ENCODE measurements at regions of chr3 and their contacts with region 1.

Region 1: GRCh38 chr3:151918253-151919029 is 45.0 kb downstream of the SUCNR1 start:
- DNase-seq: no peak
- ATAC-seq: peak; percentile 55

Region 2: GRCh38 chr3:151439652-151440129 is 478.8 kb before region 1 on chr3:
- intact Hi-C with region 1: loop called (anchors 10 kb)
- DNase-seq: no peak
- ATAC-seq: peak; percentile 84

Region 3: DNA sequence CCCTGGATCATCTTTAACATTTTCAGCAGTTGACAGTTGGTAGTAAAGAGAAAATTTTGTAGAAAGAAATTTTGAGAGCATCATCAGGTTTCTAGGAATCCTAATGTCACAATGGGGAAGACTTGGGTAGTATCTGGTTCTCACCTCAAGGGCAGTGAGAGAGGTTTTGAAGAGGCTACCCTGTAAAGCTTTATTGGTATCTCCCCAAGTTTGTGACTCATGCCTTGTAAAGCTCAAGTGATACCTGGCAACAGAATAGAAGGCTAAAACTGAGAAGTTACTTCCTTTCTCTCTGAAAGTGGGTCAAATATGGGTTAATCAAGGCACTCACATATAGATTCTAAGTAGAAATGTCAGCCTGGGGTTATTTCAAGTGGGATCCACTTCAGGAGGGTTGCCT is 151.4 kb after region 1 on chr3:
- intact Hi-C with region 1: no loop called
- DNase-seq: no peak
- ATAC-seq: no peak

Measured in Right ventricle myocardium superior (tissue), 1 donor.